Gastrocnemius medialis (tissue), 4 donors: ENCODE measurements at regions of chr10 and their contacts with region 1.

Region 1: GRCh38 chr10:132637477-132638129 is 100.0 kb downstream of the INPP5A start:
- DNase-seq: peak in 1 of 2 donors; percentile 12
- ATAC-seq: peak; percentile 72 to 83
- H3K4me3 ChIP-seq: no peak overlapping the region
- H3K27ac ChIP-seq: no peak overlapping the region
- H3K4me1 ChIP-seq: peaks cover 14 to 23% of the 10 kb centered on the region in 2 donors
- H3K27me3 ChIP-seq: no peaks in the 10 kb centered on the region
- CTCF ChIP-seq: peak; percentile 56 to 78 (median 69)
- POLR2A ChIP-seq: no peak

Region 2: GRCh38 chr10:132387764-132388210 is 249.8 kb before region 1 on chr10:
- in situ Hi-C with region 1: loop called in 3 of 4 experiments (anchors 25 kb)
- intact Hi-C with region 1: no loop called
- DNase-seq: peak in 1 of 2 donors; percentile 48
- ATAC-seq: peak in 1 of 2 donors; percentile 45
- H3K4me3 ChIP-seq: no peak overlapping the region
- H3K27ac ChIP-seq: peak overlapping the region in 2 of 4 donors; percentile 26 to 57
- H3K4me1 ChIP-seq: peaks cover 0 to 10% of the 10 kb centered on the region in 2 donors
- H3K27me3 ChIP-seq: no peaks in the 10 kb centered on the region
- CTCF ChIP-seq: peak; percentile 48 to 81 (median 74)
- POLR2A ChIP-seq: no peak

Region 3: GRCh38 chr10:132506711-132507408 is 130.7 kb before region 1 on chr10:
- in situ Hi-C with region 1: no loop called
- intact Hi-C with region 1: loop called (anchors 1 kb)
- DNase-seq: peak; percentile 79 to 82
- ATAC-seq: peak; percentile 86 to 93
- H3K4me3 ChIP-seq: no peak overlapping the region
- H3K27ac ChIP-seq: peak overlapping the region; percentile 72 to 82 (median 80)
- H3K4me1 ChIP-seq: peaks cover 25 to 33% of the 10 kb centered on the region in 2 donors
- H3K27me3 ChIP-seq: no peaks in the 10 kb centered on the region
- CTCF ChIP-seq: no peak
- POLR2A ChIP-seq: no peak

Region 4: DNA sequence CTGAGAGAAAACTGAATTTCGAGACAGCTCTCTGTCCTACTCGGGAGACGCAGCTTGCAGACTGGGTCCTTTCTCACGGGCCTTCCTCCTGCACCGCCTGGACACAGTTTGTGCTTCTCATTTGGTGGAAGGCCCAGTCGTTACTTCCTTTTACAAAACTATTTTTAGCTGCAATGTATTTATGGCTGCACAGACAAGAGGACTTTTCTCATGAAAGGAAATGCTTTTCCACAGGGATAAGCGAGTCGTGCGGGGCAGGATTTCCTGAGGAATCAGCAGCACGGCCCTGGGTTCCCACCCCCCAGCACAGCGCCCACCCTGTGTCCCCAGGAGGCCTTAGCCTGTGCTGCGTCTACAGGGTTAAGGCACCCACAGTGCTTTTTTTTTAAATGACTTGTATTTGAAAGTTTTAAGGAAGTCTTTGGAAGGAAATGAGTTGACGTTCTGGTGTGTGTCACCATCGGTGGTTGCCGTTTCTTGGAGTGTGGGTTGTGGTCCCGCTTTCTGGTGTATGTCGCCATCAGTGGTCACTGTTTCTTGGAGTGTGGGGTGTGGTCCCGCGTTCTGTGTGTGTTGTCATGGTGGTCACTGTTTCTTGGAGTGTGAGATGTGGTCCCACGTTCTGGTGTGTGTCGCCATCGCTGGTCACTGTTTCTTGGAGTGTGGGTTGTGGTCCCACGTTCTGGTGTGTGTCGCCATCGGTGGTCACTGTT is 49.1 kb before region 1 on chr10:
- in situ Hi-C with region 1: no loop called
- intact Hi-C with region 1: loop called (anchors 2 kb)
- DNase-seq: peak; percentile 43 to 56
- ATAC-seq: peak; percentile 60 to 75
- H3K4me3 ChIP-seq: peak overlapping the region; percentile 18 to 45 (median 33)
- H3K27ac ChIP-seq: peak overlapping the region; percentile 78 to 93 (median 84)
- H3K4me1 ChIP-seq: peaks cover 77 to 82% of the 10 kb centered on the region in 2 donors
- H3K27me3 ChIP-seq: no peaks in the 10 kb centered on the region
- CTCF ChIP-seq: no peak
- POLR2A ChIP-seq: no peak

Region 5: DNA sequence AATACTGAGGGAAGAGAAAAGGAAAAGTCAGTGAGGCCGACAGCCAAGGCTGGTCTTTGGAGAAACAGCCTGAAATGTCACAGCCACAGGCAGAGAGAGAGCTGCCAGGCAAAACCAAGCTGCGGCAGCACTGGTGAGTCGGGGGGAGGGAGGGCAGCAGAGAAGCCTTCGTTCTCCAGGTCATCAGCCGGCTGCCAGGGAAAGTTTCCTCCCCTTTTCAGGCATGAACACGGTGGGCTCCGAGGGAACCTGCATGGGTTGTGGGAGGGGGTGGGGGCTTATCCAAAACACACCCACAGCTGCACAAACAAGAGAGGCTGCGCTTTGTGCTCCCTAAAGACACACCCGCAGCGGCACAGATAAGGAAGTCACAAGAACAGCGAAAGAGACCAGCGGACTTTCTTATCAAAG is 210.7 kb after region 1 on chr10:
- in situ Hi-C with region 1: no loop called
- intact Hi-C with region 1: no loop called
- DNase-seq: peak in 1 of 2 donors; percentile 6
- ATAC-seq: no peak
- H3K4me3 ChIP-seq: no peak overlapping the region
- H3K27ac ChIP-seq: no peak overlapping the region
- H3K4me1 ChIP-seq: no peaks in the 10 kb centered on the region
- H3K27me3 ChIP-seq: peaks cover 20 to 30% (median 26%) of the 10 kb centered on the region in 3 donors
- CTCF ChIP-seq: no peak
- POLR2A ChIP-seq: no peak

Region 6: GRCh38 chr10:132929953-132930548 is 292.4 kb after region 1 on chr10:
- in situ Hi-C with region 1: no loop called
- intact Hi-C with region 1: no loop called
- DNase-seq: no peak
- ATAC-seq: no peak
- H3K4me3 ChIP-seq: no peak overlapping the region
- H3K27ac ChIP-seq: no peak overlapping the region
- H3K4me1 ChIP-seq: no peaks in the 10 kb centered on the region
- H3K27me3 ChIP-seq: no peaks in the 10 kb centered on the region
- CTCF ChIP-seq: no peak
- POLR2A ChIP-seq: no peak